HepG2 (cell line): ENCODE measurements at regions of chr6 and their contacts with region 1.

Region 1: DNA sequence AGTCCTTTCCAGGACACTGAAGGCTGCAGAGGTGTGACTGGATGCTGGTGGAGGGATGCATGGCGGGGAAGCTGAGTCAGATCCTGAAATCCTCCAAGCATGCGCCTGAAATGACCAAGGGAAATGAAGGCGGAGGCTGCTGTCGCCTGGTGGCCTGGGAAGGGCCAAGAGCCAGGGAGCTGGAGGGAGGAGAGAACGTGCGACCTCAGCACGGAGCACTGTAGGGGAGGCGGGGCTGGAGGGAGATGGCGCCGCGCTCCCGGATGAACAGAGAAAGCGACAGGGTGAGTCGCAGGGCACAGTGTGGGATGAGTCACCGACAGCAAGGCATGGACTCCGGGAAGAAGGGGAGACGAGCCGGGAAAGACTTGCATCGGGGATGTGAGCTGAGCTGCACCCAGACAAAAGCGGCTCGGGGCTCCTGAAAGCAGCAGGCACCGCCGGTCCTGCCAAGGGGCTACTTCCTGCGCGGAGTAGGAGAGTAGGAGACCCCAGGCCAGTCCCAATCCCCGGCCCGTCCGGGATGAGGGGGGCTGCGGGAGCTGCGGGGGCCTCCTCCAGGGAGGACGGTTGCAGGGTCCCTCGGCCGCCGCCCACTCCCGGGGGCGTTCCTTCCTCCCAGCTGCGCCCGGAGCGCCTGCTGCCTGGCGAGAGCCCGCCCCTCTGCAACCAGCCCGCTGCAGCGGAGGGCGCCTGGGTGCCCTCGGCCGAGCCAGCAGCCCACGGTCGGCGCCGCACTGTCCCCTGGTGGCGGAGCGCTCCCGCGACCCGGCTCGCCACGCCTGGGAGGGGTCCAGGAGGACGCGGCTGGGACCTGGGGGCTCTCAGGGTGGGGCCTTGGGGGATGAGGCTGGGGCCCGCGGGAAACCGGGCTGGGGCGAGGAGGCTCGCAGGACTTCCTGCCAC is 11.0 kb upstream of the NQO2 start:
- DNase-seq: peak; percentile 86
- ATAC-seq: peak; percentile 89
- H3K4me3 ChIP-seq: peak overlapping the region; percentile 72 to 81 (median 78)
- H3K27ac ChIP-seq: peak overlapping the region; percentile 96
- H3K4me1 ChIP-seq: peaks cover 61% of the 10 kb centered on the region
- H3K27me3 ChIP-seq: no peaks in the 10 kb centered on the region; a peak in 1 of 5 replicates
- CTCF ChIP-seq: peak; percentile 93
- EP300 ChIP-seq: peak in 1 of 2 experiments; percentile 10; a peak in 2 of 4 replicates
- POLR2A ChIP-seq: peak; percentile 72 to 80
- RAD21 ChIP-seq: peak; percentile 99

Region 2: GRCh38 chr6:2791124-2791974 is 197.3 kb before region 1 on chr6:
- CTCF ChIA-PET with region 1: interaction called, 7 read pairs
- POLR2A ChIA-PET with region 1: interaction called, 3 read pairs
- in situ Hi-C with region 1: no loop called
- intact Hi-C with region 1: loop called (anchors 1 kb)
- DNase-seq: peak; percentile 81
- ATAC-seq: peak; percentile 94
- H3K4me3 ChIP-seq: no peak overlapping the region
- H3K27ac ChIP-seq: no peak overlapping the region
- H3K4me1 ChIP-seq: peaks cover 9% of the 10 kb centered on the region; the same call in 1 of the 2 replicates
- H3K27me3 ChIP-seq: no peaks in the 10 kb centered on the region
- CTCF ChIP-seq: peak; percentile 94
- EP300 ChIP-seq: 0 out of 4 replicates have a peak, but pooled peaks of 1 of the 2 experiments have one; percentile 11
- POLR2A ChIP-seq: no peak
- RAD21 ChIP-seq: peak; percentile 96

Region 3: DNA sequence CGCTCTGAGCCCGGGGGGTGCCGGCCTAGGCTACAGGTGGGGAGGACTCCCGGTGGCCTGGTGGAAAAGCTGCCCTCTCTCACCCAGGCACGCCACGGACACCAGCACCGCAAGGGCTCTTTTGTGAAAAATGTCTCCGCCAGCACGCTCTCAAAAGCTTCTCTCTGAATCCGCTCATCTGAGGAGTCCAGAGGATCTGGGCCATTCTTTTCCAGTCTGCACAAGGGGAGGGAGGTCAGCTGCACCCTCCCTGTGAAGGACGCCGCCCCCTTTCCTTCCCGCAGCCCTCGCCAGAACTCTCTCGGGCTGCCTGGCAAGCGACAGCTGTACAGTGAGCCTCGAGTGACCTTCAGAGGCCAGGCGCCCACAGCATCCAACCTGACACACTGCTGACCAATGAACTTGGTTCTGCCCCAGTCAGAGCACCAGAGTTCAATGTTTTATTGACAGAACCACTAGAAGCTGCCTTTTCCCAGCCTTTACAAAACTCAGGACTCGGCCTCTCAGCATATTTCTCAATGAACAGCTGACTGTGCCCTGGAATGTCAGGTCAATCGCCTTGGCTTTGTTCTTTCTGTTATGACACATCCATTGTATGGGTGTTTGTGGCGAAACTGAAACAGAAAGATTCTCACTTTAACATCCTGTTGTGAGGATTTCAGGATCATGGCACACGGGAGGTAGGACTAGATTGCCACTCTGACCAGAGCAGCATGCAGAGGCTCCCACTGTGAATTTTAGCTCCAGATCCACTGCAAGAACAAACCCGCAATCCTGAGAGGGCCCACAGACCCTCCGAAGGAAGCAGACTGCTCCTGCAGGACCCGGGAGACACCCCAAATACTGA is 112.2 kb before region 1 on chr6:
- CTCF ChIA-PET with region 1: no interaction called
- POLR2A ChIA-PET with region 1: interaction called, 25 read pairs
- in situ Hi-C with region 1: no loop called
- intact Hi-C with region 1: no loop called
- DNase-seq: peak; percentile 100
- ATAC-seq: peak; percentile 97
- H3K4me3 ChIP-seq: peak overlapping the region; percentile 58 to 79 (median 60)
- H3K27ac ChIP-seq: peak overlapping the region; percentile 83
- H3K4me1 ChIP-seq: peaks cover 48% of the 10 kb centered on the region
- H3K27me3 ChIP-seq: no peaks in the 10 kb centered on the region; a peak in 1 of 5 replicates
- CTCF ChIP-seq: peak; percentile 61
- EP300 ChIP-seq: peak; percentile 72 to 96
- POLR2A ChIP-seq: peak; percentile 52 to 54; a peak in 2 of 4 replicates
- RAD21 ChIP-seq: peak; percentile 41; the same call in 1 of the 2 replicates

Region 4: DNA sequence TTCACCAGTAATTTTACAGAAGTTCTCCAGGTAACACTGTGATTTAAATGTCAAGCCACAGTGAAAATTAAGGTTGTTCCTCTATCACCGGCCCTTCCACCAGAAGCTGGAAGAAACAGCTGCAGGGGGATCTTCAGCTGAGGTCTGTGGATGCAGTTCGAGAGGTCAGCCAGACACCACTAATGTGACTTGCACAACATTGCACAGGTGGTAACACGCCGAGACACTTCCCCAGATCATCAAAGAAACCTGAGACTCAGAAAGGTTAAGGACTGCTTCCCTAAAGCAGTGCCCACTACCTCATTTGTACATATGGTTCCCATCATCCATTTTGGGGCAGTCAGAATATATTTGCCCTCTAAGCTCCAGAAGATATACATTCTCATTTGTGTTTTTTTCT is 77.5 kb before region 1 on chr6:
- CTCF ChIA-PET with region 1: no interaction called
- POLR2A ChIA-PET with region 1: no interaction called
- in situ Hi-C with region 1: no loop called
- intact Hi-C with region 1: no loop called
- DNase-seq: no peak
- ATAC-seq: no peak
- H3K4me3 ChIP-seq: no peak overlapping the region
- H3K27ac ChIP-seq: no peak overlapping the region
- H3K4me1 ChIP-seq: peaks cover 35% of the 10 kb centered on the region
- H3K27me3 ChIP-seq: peaks cover 0 to 20% of the 10 kb centered on the region in 2 experiments; a peak in 4 of 5 replicates
- CTCF ChIP-seq: no peak
- EP300 ChIP-seq: no peak
- POLR2A ChIP-seq: no peak
- RAD21 ChIP-seq: no peak

Region 5: DNA sequence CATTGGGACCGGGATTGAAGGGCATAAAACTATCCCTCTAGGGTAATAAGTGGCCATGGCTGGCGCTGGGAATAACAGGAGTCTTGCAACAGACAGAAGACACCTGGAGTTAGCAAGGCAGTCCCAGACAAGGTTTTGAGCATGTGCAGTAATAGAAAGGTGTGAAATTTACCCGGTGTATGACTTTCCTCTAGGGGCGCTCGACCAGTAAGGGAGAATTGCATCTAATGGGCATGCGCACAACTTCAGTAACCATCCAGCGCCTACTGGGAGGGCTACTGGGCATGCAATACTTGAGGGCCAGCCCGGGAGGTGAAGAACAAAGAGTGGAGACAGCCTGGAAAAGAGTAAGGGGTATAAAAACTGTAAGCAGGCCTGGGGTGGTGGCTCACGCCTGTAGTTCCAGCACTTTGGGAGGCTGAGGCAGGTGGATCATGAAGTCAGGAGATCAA is 50.0 kb before region 1 on chr6:
- CTCF ChIA-PET with region 1: interaction called, 3 read pairs
- POLR2A ChIA-PET with region 1: interaction called, 6 read pairs
- in situ Hi-C with region 1: no loop called
- intact Hi-C with region 1: loop called (anchors 1 kb)
- DNase-seq: peak; percentile 90
- ATAC-seq: peak; percentile 84
- H3K4me3 ChIP-seq: no peak overlapping the region
- H3K27ac ChIP-seq: no peak overlapping the region
- H3K4me1 ChIP-seq: peaks cover 36% of the 10 kb centered on the region
- H3K27me3 ChIP-seq: peaks cover 0 to 7% of the 10 kb centered on the region in 2 experiments; a peak in 2 of 5 replicates
- CTCF ChIP-seq: peak; percentile 81
- EP300 ChIP-seq: no peak
- POLR2A ChIP-seq: no peak
- RAD21 ChIP-seq: no peak

Region 6: GRCh38 chr6:2971420-2972218 is 17.1 kb before region 1 on chr6 and contains the start of gene SERPINB6:
- CTCF ChIA-PET with region 1: no interaction called
- POLR2A ChIA-PET with region 1: interaction called, 25 read pairs
- in situ Hi-C with region 1: no loop called
- intact Hi-C with region 1: loop called (anchors 2 kb)
- DNase-seq: peak; percentile 38
- ATAC-seq: peak; percentile 87
- H3K4me3 ChIP-seq: peak within 1 kb of the TSS; percentile 61 to 84 (median 68)
- H3K27ac ChIP-seq: peak within 1 kb of the TSS; percentile 63
- H3K4me1 ChIP-seq: peaks cover 50% of the 10 kb centered on the region
- H3K27me3 ChIP-seq: peaks cover 0 to 8% of the 10 kb centered on the region in 2 experiments; a peak in 1 of 5 replicates
- CTCF ChIP-seq: peak; percentile 11; the same call in 1 of the 2 replicates
- EP300 ChIP-seq: no peak; a peak in 1 of 4 replicates
- POLR2A ChIP-seq: peak in 1 of 2 experiments; percentile 15; a peak in 1 of 4 replicates
- RAD21 ChIP-seq: no peak
- total RNA-seq, gene SERPINB6: 38.2 and 44.8 TPM in 2 replicates

Region 7: DNA sequence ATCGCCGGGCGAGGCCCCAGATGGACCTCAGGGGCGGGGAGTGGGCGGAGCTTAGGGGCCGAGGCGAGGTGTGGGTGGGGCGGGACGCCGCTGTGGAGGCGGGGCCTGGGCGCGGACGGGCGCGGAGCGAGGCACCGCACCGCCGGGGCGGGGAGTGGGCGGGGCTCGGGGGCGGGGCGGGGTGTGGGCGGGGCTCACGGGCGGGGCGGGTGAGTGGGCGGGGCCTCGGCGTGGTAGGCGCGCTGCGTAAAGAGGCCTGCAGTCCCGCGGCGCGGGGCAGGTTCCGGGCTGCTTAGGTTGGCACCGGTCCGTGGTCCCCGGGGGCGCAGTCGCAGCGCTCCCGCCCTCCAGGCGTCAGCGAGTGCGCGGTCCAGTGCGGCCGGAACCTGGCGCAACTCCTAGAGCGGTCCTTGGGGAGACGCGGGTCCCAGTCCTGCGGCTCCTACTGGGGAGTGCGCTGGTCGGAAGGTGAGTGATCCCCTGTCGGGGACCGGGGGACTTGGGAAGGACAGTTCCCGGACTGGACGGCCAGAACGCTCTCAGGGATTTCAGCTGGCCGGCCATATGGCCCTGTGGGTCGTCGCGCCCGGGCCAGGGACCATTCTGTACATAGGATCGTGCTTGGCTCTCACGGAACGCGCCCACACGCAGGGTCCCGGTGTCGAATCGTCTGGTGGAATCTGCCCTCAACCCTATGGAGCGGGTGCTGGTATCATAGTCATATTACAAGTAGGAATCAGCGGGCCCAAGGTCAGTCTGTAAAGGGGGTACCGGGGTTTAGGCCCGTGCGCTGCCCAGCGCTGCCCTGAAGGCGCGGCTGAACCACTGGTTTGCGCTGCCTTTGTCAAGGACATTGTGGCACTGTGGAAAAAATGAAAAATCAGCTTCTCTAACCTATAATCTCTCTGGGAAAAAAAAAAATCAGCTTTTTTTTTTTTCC is 11.2 kb after region 1 on chr6 and contains the start of gene NQO2:
- CTCF ChIA-PET with region 1: no interaction called
- POLR2A ChIA-PET with region 1: interaction called, 118 read pairs
- in situ Hi-C with region 1: no loop called
- intact Hi-C with region 1: no loop called
- DNase-seq: peak; percentile 76
- ATAC-seq: peak; percentile 79
- H3K4me3 ChIP-seq: peak within 1 kb of the TSS; percentile 91 to 100 (median 100)
- H3K27ac ChIP-seq: peak within 1 kb of the TSS; percentile 92
- H3K4me1 ChIP-seq: peaks cover 44% of the 10 kb centered on the region
- H3K27me3 ChIP-seq: no peaks in the 10 kb centered on the region; a peak in 1 of 5 replicates
- CTCF ChIP-seq: peak; percentile 27; the same call in 1 of the 2 replicates
- EP300 ChIP-seq: 0 out of 4 replicates have a peak, but pooled peaks of 1 of the 2 experiments have one; percentile 14
- POLR2A ChIP-seq: peak; percentile 95 to 98
- RAD21 ChIP-seq: peak; percentile 58
- total RNA-seq, gene NQO2: 56.5 and 63.0 TPM in 2 replicates

Region 8: GRCh38 chr6:3068329-3069214 is 79.9 kb after region 1 on chr6 and contains the start of gene RIPK1:
- CTCF ChIA-PET with region 1: no interaction called
- POLR2A ChIA-PET with region 1: interaction called, 34 read pairs
- in situ Hi-C with region 1: no loop called
- intact Hi-C with region 1: no loop called
- DNase-seq: peak; percentile 89
- ATAC-seq: peak; percentile 82
- H3K4me3 ChIP-seq: peak within 1 kb of the TSS; percentile 92 to 99 (median 97)
- H3K27ac ChIP-seq: peak within 1 kb of the TSS; percentile 99
- H3K4me1 ChIP-seq: peaks cover 54% of the 10 kb centered on the region
- H3K27me3 ChIP-seq: no peaks in the 10 kb centered on the region; a peak in 1 of 5 replicates
- CTCF ChIP-seq: peak; percentile 80
- EP300 ChIP-seq: no peak; a peak in 1 of 4 replicates
- POLR2A ChIP-seq: peak; percentile 76 to 94
- RAD21 ChIP-seq: peak; percentile 70
- total RNA-seq, gene RIPK1: 10.3 and 15.0 TPM in 2 replicates